HEK293 (cell line): ENCODE measurements at regions of chr17 and their contacts with region 1.

Region 1: DNA sequence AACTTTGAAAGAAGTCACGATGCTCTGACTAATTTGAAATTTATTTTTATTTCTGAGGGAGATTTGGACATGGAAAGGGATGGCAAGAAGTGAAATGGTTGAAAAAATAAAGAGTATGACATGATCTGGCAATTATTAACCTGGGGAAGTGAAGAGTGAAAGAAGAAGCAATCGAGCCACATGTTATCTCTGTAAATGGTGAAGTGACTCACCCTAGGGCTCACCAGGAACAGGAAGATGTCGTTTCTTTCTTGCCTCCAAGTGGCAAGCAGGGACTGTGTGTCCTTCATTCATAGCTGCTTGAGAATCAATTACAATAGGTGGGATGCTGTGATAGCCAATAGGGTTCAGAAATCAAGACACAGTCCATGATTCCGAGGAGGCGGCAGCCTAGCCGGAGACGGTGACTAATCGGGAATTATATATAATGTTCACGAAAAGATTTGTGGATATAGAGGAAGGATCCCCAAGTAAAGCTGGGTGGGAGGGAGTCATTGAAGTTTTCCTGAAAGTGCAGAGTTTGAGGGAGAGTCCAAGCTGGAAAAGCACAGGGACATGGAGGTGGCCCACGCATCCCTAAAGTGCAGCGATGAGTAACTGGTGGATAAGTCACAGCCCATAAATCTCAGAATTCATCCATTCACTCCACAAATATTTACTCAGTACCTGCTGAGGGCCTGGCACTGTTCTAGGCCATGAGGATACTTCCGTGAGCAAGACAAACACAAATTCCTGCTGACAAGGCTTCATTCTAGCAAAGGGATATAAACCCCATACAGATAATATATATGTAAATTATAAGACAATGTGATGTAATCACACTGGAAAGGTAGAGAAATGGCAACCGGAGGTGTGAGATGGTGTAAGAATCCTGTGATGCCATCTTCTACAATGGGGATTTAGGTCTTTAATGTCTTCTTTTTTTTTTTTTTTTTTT is 18.4 kb upstream of the KRT20 start:
- H3K4me3 ChIP-seq: no peak overlapping the region
- H3K27ac ChIP-seq: peak overlapping the region; percentile 63
- H3K4me1 ChIP-seq: peaks cover 27% of the 10 kb centered on the region
- CTCF ChIP-seq: no peak

Region 2: DNA sequence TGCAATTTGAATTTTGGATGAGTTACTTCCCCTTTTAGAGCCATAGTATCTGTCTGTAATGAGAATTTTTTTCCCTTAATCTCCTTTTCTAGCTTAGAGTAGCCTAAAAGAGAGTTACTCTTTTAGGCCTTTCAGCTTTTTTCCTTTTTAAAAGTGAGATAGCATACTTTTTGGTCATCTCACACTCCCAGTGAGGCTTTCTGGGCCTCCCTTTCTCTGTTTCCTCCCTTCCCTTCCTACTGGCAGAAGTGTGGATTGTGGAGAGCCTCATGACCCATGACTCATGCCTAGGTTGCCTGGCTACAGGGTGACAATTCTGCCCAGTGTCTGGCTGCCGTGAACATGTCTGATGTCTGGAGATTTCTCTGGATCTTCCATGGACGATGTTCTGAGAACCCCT is 18.8 kb after region 1 on chr17:
- CTCF ChIA-PET with region 1: no interaction called
- POLR2A ChIA-PET with region 1: no interaction called
- H3K4me3 ChIP-seq: no peak overlapping the region
- H3K27ac ChIP-seq: no peak overlapping the region
- H3K4me1 ChIP-seq: no peaks in the 10 kb centered on the region
- CTCF ChIP-seq: no peak

Region 3: DNA sequence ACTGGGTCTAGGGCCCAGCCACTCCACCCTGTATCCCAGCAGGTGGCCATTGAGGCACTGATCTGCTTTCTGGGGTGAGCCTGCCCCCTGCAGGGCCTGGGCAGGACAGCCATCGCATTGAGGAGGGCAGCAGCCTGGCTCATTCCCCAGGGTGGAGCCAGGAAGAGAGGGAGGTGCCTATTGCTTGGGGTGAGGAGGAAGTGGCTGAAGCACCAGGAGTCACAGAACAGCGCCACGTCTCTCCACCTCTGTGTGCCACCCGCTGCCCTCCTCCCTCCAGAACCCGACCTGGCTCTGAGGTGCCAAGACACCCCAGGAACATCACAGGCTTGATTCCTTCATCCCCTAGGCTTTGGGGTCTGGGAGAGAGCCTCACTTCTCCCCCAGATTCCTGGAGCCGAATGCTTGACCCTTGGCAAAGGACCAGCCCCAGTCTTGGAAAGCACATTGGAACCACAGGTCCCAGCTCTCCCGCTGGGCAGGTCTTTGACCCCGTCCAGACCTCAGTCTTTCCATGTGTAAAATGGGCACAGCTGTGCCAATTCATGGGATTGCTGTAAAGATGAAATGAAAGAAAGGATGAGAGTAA is 593.5 kb after region 1 on chr17:
- CTCF ChIA-PET with region 1: interaction called, 12 read pairs
- POLR2A ChIA-PET with region 1: no interaction called
- H3K4me3 ChIP-seq: no peak overlapping the region
- H3K27ac ChIP-seq: no peak overlapping the region
- H3K4me1 ChIP-seq: peaks cover 6% of the 10 kb centered on the region
- CTCF ChIP-seq: peak; percentile 95